Aorta (tissue), 5 donors: ENCODE measurements at regions of chr20 and their contacts with region 1.

Region 1: GRCh38 chr20:10511509-10512251 is 76.6 kb downstream of the SLX4IP start:
- DNase-seq: peak; percentile 91
- ATAC-seq: peak; percentile 93
- H3K4me3 ChIP-seq: no peak overlapping the region
- H3K27ac ChIP-seq: peak overlapping the region in 1 of 2 donors; percentile 71
- H3K4me1 ChIP-seq: peaks cover 0 to 3% of the 10 kb centered on the region in 2 donors
- H3K27me3 ChIP-seq: no peaks in the 10 kb centered on the region

Region 2: DNA sequence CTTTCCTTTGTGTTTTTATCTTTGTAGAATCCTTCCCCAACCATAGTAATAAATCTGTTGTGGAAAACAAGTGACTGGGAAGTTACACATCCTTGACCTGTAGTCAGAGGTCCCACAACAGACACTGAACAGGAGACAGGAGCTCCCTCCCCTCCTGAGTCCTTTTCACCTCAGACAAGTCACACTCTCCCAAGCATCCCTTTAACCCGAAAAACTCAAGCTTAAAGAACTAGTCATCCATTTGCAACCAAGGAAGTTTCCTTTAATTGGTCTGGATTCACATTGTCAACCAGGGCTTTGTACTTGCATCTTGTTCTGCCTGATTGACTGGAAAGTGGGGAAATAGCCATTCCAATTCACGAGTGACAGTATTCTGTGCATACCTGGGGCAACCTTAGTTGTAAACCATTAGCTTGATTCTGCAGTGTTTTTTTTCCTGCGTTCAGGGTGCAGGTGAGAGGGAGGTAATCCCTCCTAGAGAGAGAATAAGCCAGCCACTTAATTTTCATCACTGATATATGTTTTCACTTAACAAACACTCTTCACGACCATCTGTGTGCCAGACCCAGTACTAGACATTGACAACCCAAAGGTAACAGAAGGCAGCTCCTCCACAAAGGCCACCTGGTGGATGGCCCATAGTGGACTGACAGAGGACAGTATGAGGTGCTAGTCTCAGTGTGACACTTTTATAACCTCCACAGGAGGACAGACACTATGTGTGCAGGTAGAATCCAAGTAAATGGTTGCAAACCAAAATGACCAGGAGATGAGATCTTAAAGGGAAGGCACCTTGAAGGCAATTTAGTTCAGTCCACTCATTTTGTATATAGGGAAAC is 35.8 kb after region 1 on chr20:
- intact Hi-C with region 1: loop called in 1 of 2 experiments (anchors 5 kb)
- DNase-seq: no peak
- ATAC-seq: no peak
- H3K4me3 ChIP-seq: no peak overlapping the region
- H3K27ac ChIP-seq: no peak overlapping the region
- H3K4me1 ChIP-seq: no peaks in the 10 kb centered on the region
- H3K27me3 ChIP-seq: no peaks in the 10 kb centered on the region

Region 3: DNA sequence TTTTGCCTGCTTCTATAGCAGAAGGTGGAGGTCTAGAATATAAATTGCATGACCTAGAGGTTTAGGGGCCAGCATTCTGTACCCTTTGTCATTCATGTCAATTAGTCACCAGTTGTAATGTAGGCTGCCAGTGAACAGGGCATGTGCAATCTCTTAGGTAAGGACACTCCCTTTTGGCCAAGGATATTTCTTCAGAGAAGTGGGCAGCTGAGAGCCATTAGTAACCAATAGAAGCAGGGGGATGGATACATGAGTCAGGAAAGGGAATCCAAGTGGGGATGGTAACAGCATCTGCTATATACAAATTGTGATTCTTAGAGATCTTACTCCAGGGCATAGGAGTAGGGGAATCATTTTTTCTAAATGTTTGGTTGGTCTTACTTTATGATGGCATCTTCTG is 656.3 kb after region 1 on chr20:
- intact Hi-C with region 1: no loop called
- DNase-seq: no peak
- ATAC-seq: no peak
- H3K4me3 ChIP-seq: no peak overlapping the region
- H3K27ac ChIP-seq: no peak overlapping the region
- H3K4me1 ChIP-seq: peaks cover 0 to 6% of the 10 kb centered on the region in 2 donors
- H3K27me3 ChIP-seq: no peaks in the 10 kb centered on the region